Heart right ventricle (tissue), 16 donors: ENCODE measurements at regions of chr1 and their contacts with region 1.

Region 1: DNA sequence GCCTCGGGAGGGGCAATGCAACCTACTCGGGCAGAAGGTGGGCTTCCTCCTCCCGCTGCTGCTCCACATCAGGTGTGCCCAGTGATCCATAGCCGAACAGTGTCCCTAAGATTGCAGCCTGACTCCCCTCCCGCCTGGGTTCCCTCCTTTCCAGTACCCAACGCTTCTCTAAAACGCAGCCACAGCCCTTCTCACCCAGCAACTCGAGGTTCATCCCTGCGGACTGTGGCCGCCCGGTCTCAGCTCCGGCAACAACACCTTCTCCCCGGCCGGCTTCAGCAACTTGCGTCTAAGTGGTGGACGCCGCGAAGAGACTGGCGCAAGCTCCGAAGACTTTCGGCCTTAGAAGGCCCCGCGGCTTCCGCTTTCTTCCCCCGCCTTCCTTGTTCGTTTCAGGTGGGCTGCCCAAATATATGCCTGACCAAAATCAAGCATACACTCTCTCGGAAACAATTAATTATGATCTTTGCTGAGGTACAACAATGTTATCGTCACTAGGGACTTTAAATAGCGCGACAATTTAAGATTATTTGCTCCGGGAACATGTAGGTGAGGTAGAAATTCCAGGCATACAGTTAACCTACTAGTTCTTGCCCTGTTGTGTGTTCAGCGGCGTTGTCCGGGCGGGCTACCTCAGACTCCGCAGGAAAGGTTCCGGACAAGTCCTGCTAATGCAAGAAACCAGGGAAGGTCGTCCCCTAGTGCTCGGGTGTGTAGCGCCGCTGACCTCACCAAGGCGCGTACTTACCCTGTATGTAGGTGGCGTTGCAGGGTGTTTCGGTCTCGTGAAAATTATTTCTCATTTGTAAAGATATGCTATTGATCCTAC is at the start of gene RBBP5:
- DNase-seq: peak; percentile 94 to 96
- ATAC-seq: peak; percentile 98 to 99 (median 99)
- H3K4me3 ChIP-seq: peak within 1 kb of the TSS; percentile 62 to 95 (median 86)
- H3K27ac ChIP-seq: peak within 1 kb of the TSS; percentile 88 to 98 (median 94)
- H3K4me1 ChIP-seq: peaks cover 10 to 35% (median 29%) of the 10 kb centered on the region in 9 donors
- H3K27me3 ChIP-seq: no peaks in the 10 kb centered on the region
- CTCF ChIP-seq: peak; percentile 47 to 92 (median 64)
- total RNA-seq, gene RBBP5: 8.2 to 12.4 (median 9.1) TPM

Region 2: DNA sequence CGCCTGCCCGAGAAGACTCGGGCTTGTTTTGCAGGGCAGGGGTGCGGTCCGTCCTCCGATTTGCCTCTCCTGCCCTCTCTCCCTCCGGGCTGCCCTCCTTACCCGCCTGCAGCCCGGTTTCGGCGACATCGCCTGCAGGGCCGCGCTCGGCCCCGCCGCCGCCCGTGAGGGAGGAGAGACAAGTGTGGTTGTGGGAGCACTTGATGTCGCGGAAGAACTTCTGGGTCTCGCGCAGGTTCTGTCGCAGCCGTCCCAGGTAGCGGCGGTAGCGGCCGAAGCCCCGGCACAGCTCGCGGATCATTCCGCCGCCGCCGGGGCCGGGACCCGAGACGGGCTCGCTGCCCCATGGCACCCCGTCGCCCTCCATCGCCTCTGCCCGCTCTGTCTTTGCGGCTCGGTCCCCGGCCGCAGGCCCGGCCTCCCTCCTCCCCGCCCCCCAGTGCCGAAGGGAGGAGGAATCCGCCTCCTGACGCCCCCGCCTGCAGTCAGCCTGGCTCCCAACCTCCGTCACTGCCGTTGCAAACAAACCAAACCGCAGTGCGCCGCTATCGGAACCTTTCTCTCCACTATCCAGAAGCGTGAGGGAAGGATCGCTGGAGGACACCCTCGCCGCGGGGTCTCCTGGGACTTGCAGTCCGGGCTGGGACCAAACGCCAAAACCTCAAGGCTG is 89.4 kb after region 1 on chr1 and contains the start of gene DSTYK:
- intact Hi-C with region 1: loop called in 1 of 10 experiments (anchors 1 kb)
- DNase-seq: peak; percentile 91 to 95
- ATAC-seq: peak; percentile 97 to 99 (median 98)
- H3K4me3 ChIP-seq: peak within 1 kb of the TSS; percentile 80 to 99 (median 92)
- H3K27ac ChIP-seq: peak within 1 kb of the TSS; percentile 85 to 95 (median 91)
- H3K4me1 ChIP-seq: peaks cover 4 to 37% (median 14%) of the 10 kb centered on the region in 9 donors
- H3K27me3 ChIP-seq: no peaks in the 10 kb centered on the region
- CTCF ChIP-seq: peak in 2 of 9 donors; percentile 20 to 22
- total RNA-seq, gene DSTYK: 5.7 to 9.5 (median 8.0) TPM

Region 3: DNA sequence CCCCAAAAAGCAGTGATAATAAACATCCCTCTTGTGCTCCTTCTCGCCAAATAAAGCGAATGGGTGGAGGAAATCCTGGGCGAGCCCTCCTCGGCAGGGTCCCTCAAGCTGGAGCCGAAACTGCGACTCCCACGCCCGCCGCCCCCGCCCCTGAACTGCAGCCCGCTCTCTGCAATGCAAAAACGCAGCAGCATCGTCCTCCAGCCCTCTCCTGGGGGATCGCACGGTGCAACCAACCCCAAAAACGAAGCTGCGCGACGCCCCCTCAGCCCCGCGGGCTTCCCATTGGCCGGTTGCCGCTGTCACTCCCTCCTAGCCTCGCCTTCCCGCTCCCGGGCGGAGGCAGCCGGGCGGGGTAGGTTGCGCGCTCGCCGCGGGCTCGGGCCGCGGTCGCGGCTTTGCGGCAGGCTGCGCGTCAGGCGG is 105.7 kb after region 1 on chr1 and contains the start of gene TMCC2:
- intact Hi-C with region 1: loop called in 1 of 10 experiments (anchors 10 kb)
- DNase-seq: peak; percentile 93 to 94
- ATAC-seq: peak; percentile 95 to 98 (median 97)
- H3K4me3 ChIP-seq: peak within 1 kb of the TSS; percentile 35 to 85 (median 62)
- H3K27ac ChIP-seq: peak within 1 kb of the TSS in 2 of 10 donors; percentile 10 to 19
- H3K4me1 ChIP-seq: peaks cover 0 to 30% (median 23%) of the 10 kb centered on the region in 9 donors
- H3K27me3 ChIP-seq: peaks cover 0 to 36% (median 0%) of the 10 kb centered on the region in 7 donors
- CTCF ChIP-seq: no peak
- total RNA-seq, gene TMCC2: 0.62 to 2.6 (median 1.8) TPM